Testis (tissue), 5 donors: ENCODE measurements at regions of chr1 and their contacts with region 1.

Region 1: DNA sequence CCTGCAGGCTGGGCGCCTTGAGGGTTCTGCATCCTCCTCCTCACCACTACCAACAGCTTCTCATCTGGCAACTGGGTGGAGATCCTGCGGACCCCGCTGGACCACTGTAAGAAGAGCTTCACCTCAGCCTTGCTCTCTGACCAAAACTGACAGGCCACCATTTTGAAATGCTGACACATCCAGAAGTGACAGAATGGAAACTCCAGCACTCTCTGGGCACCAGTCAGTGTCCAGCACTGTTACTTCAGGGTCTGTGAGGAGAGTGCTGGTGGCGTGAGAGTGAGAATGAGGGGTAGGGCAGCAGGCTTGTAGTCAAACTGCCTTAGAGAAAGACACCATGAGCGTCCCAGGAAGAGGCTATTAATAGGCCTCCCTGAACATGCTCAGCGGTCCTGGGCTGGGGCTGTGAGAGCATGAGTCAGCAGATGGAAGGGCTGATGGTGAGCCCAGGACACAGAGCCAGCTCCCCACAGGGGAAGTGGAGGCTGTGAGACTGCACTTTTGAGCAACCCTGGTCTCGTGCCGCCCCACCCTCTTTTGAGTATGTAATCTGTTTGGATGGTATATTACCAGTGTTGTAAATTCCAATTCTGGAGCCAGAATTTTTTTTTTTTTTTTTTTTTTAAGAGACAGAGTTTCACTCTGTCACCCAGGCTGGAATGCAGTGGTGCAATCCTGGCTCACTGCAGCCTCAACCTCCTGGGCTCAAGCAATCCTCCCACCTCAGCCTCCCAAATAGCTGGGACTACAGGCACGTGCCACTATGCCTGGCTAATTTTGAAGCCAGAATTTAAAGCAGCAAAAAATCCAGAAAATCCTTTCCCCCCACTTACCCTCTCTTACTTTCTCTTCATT is 34.4 kb upstream of the SLC30A1 start:
- DNase-seq: peak; percentile 72
- H3K4me3 ChIP-seq: no peak overlapping the region
- H3K27ac ChIP-seq: peak overlapping the region in 1 of 2 donors; percentile 66
- H3K4me1 ChIP-seq: peaks cover 19% of the 10 kb centered on the region
- H3K27me3 ChIP-seq: no peaks in the 10 kb centered on the region
- CTCF ChIP-seq: no peak
- POLR2A ChIP-seq: no peak

Region 2: GRCh38 chr1:211578640-211579433 is 34.5 kb before region 1 on chr1 and contains the start of gene SLC30A1:
- intact Hi-C with region 1: loop called (anchors 5 kb)
- DNase-seq: peak; percentile 100
- H3K4me3 ChIP-seq: peak within 1 kb of the TSS; percentile 95 to 97
- H3K27ac ChIP-seq: peak within 1 kb of the TSS; percentile 94 to 98
- H3K4me1 ChIP-seq: peaks cover 8% of the 10 kb centered on the region
- H3K27me3 ChIP-seq: no peaks in the 10 kb centered on the region
- CTCF ChIP-seq: no peak
- POLR2A ChIP-seq: peak; percentile 89
- total RNA-seq, gene SLC30A1: 29.4 to 33.3 TPM

Region 3: GRCh38 chr1:211667065-211667617 is 53.8 kb after region 1 on chr1:
- intact Hi-C with region 1: no loop called
- DNase-seq: no peak
- H3K4me3 ChIP-seq: no peak overlapping the region
- H3K27ac ChIP-seq: no peak overlapping the region
- H3K4me1 ChIP-seq: peaks cover 4% of the 10 kb centered on the region
- H3K27me3 ChIP-seq: no peaks in the 10 kb centered on the region
- CTCF ChIP-seq: no peak
- POLR2A ChIP-seq: no peak